Heart right ventricle (tissue), 16 donors: ENCODE measurements at regions of chr10 and their contacts with region 1.

Region 1: DNA sequence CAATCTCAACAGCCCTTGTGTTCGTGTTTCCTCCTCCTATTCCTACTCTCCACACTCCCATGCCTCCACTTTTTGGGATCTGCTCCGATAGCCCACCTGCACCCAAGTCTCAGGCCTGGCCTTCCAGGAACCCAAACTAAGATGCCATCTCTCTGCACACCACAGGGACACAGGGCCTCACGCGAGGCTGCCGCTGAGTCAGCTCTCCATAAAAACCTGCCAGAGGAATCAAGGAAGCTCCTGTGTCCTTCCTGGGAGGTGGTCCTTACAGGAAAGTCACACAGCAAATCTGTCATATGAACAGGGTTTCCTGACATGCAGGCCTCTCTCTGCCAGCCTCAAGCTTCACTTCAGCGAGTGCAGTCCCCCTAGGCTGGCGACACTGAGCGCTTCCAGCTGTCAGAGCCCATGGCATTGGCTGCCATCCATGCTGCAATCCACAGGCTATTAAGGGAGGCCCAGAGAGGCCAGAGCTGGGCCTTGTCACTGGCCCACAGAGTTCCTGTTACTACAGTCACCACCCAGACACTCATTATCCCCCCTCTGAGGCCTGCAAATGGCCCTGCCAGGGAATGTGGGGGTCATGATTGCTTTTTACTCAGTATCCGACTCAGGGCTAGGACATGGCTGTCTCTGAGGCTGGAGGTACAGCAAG is 151.4 kb downstream of the OAT start:
- DNase-seq: peak; percentile 44 to 57
- ATAC-seq: peak; percentile 23 to 87 (median 76)
- H3K4me3 ChIP-seq: no peak overlapping the region
- H3K27ac ChIP-seq: no peak overlapping the region
- H3K4me1 ChIP-seq: peaks cover 0 to 15% (median 0%) of the 10 kb centered on the region in 9 donors
- H3K27me3 ChIP-seq: no peaks in the 10 kb centered on the region
- CTCF ChIP-seq: no peak

Region 2: DNA sequence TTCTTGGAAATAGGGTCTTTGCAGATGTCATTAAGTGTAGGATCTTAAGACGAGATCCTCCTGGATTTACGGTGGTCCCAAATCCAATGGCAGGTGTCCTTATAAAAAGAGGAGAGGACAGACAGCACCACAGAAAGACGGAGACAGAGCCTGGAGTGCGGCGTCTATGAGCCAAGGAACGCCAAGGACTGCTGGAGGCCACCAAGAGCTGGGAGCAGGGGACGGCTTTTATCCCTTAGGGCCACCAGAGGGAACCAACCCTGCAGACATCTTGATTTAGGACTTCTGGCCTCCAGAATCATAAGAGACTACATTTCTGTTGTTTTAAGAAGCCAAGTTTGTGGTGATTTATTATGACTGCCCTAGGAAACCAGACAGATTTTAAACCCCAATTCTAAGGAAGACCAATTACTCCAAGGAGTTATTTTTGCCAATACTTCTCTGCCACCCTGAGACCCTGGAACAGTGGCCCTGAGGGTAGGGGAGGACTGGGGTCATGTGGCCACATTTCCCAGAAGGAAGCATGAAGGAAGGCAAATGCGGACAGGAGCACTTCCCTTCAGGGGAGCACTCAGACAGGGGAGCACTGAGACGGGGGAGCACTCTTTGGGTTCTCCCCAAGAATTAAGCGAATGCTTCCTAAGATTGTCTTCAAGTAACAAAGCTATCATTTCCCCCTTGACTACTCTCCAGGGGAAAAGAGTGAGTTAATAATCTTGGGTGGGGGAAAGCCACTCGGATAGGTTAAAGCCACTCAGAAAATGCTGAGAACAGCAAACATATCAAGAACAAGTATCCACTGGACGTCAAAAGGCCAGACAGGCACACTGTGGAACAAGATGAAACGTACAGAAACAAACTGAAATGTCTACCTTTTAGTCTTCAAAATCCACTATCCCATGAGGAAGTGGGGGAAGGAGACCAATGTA is 241.4 kb before region 1 on chr10:
- intact Hi-C with region 1: loop called in 4 of 10 experiments (anchors 10 kb)
- DNase-seq: no peak
- ATAC-seq: peak in 6 of 8 donors; percentile 61 to 78 (median 70)
- H3K4me3 ChIP-seq: no peak overlapping the region
- H3K27ac ChIP-seq: no peak overlapping the region
- H3K4me1 ChIP-seq: peaks cover 0 to 10% (median 0%) of the 10 kb centered on the region in 9 donors
- H3K27me3 ChIP-seq: peaks cover 0 to 11% (median 4%) of the 10 kb centered on the region in 7 donors
- CTCF ChIP-seq: peak; percentile 15 to 61 (median 46)

Region 3: GRCh38 chr10:124035928-124036558 is 231.3 kb before region 1 on chr10:
- intact Hi-C with region 1: loop called in 1 of 10 experiments (anchors 10 kb)
- DNase-seq: peak in 1 of 2 donors; percentile 27
- ATAC-seq: peak in 7 of 8 donors; percentile 22 to 59 (median 33)
- H3K4me3 ChIP-seq: no peak overlapping the region
- H3K27ac ChIP-seq: peak overlapping the region in 1 of 10 donors; percentile 81
- H3K4me1 ChIP-seq: peaks cover 0 to 72% (median 8%) of the 10 kb centered on the region in 9 donors
- H3K27me3 ChIP-seq: no peaks in the 10 kb centered on the region
- CTCF ChIP-seq: no peak